H1 (cell line): ENCODE measurements at regions of chr14 and their contacts with region 1.

Region 1: DNA sequence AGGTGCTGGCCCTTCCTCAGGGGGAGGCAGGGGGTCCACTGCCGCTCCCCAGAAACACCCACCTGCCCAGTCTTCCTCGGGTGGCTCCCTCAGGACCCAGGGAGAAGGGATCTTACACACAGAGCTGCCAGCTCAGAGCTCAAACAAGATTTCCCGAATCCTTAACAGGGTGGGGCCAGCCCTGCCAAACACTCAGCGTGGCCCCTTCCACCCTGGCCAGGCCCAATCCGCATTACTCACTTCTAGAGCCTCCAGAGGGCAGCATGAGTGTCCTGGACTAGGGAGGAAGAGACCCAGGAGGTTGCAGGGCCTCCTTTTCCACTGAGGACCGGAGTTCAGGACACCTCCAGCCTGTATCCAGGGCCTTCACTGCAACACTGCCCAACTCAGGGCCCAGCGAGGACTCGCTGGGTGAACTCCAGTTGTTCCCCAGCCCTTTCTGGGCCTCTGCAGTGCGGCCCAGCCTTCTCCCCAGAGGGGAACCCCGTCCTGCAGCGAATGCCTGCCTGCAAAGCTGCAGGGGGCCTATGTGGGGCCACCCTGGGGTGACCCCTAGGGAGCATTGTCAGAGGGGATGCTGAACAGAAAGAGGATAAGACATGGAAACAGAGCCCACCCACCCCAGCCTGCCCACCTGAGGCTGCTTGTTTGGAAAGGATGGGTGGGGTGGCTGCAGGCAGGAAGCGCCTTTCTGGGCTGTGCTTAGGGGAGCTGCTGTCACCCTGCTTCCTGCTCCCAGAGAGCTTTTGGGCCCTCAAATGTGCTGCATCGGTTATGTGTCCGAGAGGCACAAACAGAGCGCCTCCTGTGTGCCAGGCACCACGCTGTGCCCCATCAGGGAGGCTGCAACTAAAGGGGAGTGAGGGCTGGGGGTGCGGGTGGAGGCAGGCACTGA is 43.8 kb downstream of the CCNK start:
- DNase-seq: no peak
- H3K4me3 ChIP-seq: no peak overlapping the region
- H3K27ac ChIP-seq: no peak overlapping the region
- H3K4me1 ChIP-seq: peaks cover 11 to 51% (median 37%) of the 10 kb centered on the region in 4 experiments
- H3K27me3 ChIP-seq: no peaks in the 10 kb centered on the region
- CTCF ChIP-seq: peak in 2 of 3 experiments; percentile 15 to 51; a peak in 2 of 4 replicates
- EP300 ChIP-seq: no peak
- POLR2A ChIP-seq: no peak
- RAD21 ChIP-seq: peak; percentile 38 to 54

Region 2: DNA sequence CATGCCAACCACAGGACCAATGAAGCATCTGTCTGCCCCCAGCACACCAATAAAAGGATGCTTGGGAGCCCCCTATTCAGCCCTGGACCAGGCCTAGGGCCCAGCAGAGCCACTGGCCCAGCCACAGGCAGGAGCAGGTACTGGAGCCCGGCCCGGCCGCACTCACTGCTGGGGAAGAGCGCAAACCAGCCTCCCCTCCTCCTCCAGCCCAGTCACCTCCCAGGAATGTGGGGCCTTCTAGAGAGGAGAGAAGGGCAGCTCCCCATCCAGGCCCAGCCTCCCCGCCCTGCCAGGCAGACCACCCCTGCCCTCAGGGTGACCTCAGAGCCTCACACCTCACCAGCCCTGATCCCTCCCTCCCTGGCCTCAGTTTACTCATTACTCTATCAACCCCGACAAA is 12.3 kb after region 1 on chr14:
- CTCF ChIA-PET with region 1: interaction called, 40 read pairs
- POLR2A ChIA-PET with region 1: interaction called, 6 read pairs
- DNase-seq: no peak
- H3K4me3 ChIP-seq: no peak overlapping the region
- H3K27ac ChIP-seq: no peak overlapping the region
- H3K4me1 ChIP-seq: peaks cover 0 to 38% (median 20%) of the 10 kb centered on the region in 4 experiments; a peak in 6 of 7 replicates
- H3K27me3 ChIP-seq: no peaks in the 10 kb centered on the region
- CTCF ChIP-seq: no peak
- EP300 ChIP-seq: no peak
- POLR2A ChIP-seq: no peak
- RAD21 ChIP-seq: no peak

Region 3: DNA sequence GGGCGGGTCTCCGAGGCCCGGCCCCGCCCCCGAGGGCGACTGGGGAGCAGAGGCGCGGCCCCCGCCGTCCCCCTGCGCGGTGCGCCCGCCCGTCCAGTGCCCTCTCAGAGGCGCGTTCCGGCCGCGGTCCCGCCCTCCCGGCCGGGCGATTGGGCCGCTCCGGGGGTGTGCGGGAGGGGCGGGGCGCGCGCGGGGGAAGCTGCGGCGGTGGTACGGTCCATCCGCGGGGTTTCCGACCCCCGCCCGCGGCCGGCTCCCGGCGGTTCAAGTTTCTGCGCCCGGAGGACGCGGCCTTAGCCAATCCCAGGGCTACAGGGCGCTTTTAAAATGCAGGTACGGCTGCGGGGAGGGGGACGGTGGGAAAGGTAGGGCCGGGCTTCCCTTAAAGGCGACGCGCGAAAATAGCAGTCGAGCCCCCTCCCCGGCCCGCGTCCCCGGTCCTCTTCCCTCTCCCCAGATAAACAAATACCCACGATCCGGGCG is 79.3 kb after region 1 on chr14:
- CTCF ChIA-PET with region 1: interaction called, 35 read pairs
- POLR2A ChIA-PET with region 1: interaction called, 3 read pairs
- DNase-seq: peak; percentile 82 to 95
- H3K4me3 ChIP-seq: peak overlapping the region; percentile 76 to 87 (median 82)
- H3K27ac ChIP-seq: no peak overlapping the region
- H3K4me1 ChIP-seq: peaks cover 4 to 28% (median 17%) of the 10 kb centered on the region in 4 experiments
- H3K27me3 ChIP-seq: peaks cover 9 to 34% (median 26%) of the 10 kb centered on the region in 4 experiments; a peak in 6 of 7 replicates
- CTCF ChIP-seq: no peak
- EP300 ChIP-seq: peak in 1 of 2 experiments; percentile 99; a peak in 2 of 3 replicates
- POLR2A ChIP-seq: no peak
- RAD21 ChIP-seq: no peak

Region 4: GRCh38 chr14:99619835-99620834 is 95.1 kb after region 1 on chr14:
- CTCF ChIA-PET with region 1: interaction called, 10 read pairs
- POLR2A ChIA-PET with region 1: no interaction called
- DNase-seq: no peak
- H3K4me3 ChIP-seq: no peak overlapping the region
- H3K27ac ChIP-seq: no peak overlapping the region
- H3K4me1 ChIP-seq: peaks cover 0 to 5% (median 1%) of the 10 kb centered on the region in 4 experiments; a peak in 3 of 7 replicates
- H3K27me3 ChIP-seq: no peaks in the 10 kb centered on the region; a peak in 1 of 7 replicates
- CTCF ChIP-seq: no peak
- EP300 ChIP-seq: no peak
- POLR2A ChIP-seq: no peak
- RAD21 ChIP-seq: no peak

Region 5: DNA sequence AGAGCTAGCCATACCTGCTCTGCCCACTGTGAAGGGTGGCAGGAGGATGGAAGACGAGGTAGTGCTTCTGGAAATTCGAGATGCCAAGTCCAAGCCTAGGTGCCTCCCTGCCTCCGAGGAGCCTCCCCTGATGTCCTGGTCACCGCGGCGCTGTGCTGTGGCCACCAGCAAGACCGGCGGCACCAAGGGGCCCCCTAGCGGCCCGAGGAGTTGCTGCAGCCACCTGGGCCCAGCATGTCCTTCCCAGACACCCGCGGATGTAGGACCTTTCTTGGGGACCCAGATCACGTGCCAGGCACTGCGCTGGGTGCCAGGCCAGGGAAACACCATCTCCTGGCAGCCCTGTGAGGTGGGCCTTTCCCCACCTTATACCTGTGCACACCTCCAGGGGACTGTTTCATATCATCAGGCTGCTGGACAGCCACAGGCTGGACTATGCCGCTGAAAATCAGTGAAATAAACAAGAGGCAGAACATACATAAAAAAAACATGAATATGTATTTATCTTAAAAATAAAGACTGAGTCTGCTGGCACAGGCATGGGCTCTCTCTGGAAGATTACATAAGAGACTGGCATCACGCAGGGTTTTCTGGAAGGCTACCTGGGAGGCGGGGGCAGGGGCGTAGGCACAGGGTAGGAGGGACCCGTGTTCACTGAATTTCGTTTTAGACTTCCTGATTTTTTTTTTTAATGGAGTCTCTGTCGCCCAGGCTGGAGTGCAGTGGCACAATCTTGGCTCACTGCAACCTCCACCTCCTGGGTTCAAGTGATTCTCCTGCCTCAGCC is 104.0 kb after region 1 on chr14:
- CTCF ChIA-PET with region 1: interaction called, 18 read pairs
- POLR2A ChIA-PET with region 1: interaction called, 3 read pairs
- DNase-seq: peak; percentile 43 to 89
- H3K4me3 ChIP-seq: no peak overlapping the region
- H3K27ac ChIP-seq: no peak overlapping the region
- H3K4me1 ChIP-seq: peaks cover 0 to 3% (median 1%) of the 10 kb centered on the region in 4 experiments; a peak in 4 of 7 replicates
- H3K27me3 ChIP-seq: no peaks in the 10 kb centered on the region
- CTCF ChIP-seq: peak in 2 of 3 experiments; percentile 99; a peak in 3 of 4 replicates
- EP300 ChIP-seq: no peak
- POLR2A ChIP-seq: no peak
- RAD21 ChIP-seq: peak; percentile 99